IMR-90 (cell line): ENCODE measurements at regions of chr1 and their contacts with region 1.

Region 1: DNA sequence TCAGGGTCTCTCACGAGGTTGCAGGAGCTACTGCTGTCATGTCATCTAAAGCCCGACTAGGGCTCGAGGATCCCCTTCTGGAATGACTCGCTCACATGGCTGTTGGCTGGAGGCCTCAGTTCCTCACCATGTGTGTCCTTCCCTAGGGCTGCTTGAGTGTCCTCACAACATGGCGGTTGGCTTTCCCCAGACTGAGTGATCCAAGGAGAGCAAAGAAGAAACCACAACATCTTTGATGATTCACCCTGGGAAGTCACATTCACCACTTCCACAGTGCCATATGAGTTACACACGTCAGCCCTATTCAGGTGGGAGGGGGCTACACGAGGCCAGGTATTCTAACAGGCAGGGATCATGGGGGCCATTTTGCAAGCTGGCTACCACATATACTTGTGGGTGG is 64.9 kb downstream of the FHAD1 start:
- DNase-seq: peak; percentile 33
- ATAC-seq: no peak
- H3K4me3 ChIP-seq: no peak overlapping the region
- H3K27ac ChIP-seq: no peak overlapping the region
- H3K4me1 ChIP-seq: no peaks in the 10 kb centered on the region; the same call in 1 of the 2 replicates
- H3K27me3 ChIP-seq: peaks cover 11% of the 10 kb centered on the region; the same call in 1 of the 2 replicates
- CTCF ChIP-seq: no peak
- POLR2A ChIP-seq: no peak
- RAD21 ChIP-seq: no peak

Region 2: GRCh38 chr1:15089258-15089992 is 222.5 kb before region 1 on chr1:
- CTCF ChIA-PET with region 1: no interaction called
- POLR2A ChIA-PET with region 1: interaction called, 10 read pairs
- dilution Hi-C with region 1: no loop called
- in situ Hi-C with region 1: no loop called
- intact Hi-C with region 1: no loop called
- DNase-seq: no peak
- ATAC-seq: no peak
- H3K4me3 ChIP-seq: no peak overlapping the region
- H3K27ac ChIP-seq: no peak overlapping the region
- H3K4me1 ChIP-seq: peaks cover 6% of the 10 kb centered on the region; the same call in 1 of the 2 replicates
- H3K27me3 ChIP-seq: no peaks in the 10 kb centered on the region
- CTCF ChIP-seq: no peak
- POLR2A ChIP-seq: no peak
- RAD21 ChIP-seq: no peak

Region 3: DNA sequence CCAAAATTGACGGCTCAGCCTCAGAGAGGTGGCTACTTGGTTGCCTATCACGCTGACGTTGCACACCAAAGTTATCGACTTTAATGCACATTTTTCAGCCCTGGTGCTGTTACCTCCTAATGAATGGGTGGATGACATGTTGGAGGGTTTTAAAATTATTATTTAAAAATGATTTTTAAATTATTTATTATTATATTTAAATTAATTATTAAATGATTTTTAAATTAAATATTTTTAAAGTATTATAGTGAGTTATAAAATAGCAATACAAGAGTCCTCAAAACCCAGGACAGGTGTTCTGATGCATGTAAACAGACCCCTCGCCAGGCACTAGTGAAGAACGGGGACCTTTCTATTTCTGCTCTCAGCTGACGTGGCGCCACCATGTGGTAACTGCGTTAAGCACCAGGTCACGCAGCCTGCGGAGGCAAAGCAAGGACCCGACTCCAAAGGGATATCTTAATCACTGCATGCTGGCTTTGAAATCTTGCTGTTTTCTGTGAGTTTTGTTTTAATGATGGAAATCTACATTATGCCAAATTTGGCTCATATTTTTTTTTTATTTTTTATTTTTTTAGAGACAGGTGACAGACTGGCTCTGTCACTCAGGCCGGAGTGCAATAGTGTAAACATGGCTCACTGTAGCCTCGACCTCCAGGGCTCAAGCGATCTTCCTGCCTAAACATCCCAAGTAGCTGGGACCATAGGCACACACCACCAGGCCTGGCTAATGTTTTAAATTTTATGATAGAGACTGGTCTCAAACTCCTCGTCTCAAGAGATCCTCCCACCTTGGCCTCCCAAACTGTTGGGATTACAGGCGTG is 189.5 kb after region 1 on chr1:
- CTCF ChIA-PET with region 1: no interaction called
- POLR2A ChIA-PET with region 1: no interaction called
- dilution Hi-C with region 1: no loop called
- in situ Hi-C with region 1: loop called (anchors 10 kb)
- intact Hi-C with region 1: no loop called
- DNase-seq: peak; percentile 49
- ATAC-seq: peak; percentile 87
- H3K4me3 ChIP-seq: no peak overlapping the region
- H3K27ac ChIP-seq: no peak overlapping the region
- H3K4me1 ChIP-seq: no peaks in the 10 kb centered on the region
- H3K27me3 ChIP-seq: no peaks in the 10 kb centered on the region
- CTCF ChIP-seq: peak; percentile 67
- POLR2A ChIP-seq: no peak
- RAD21 ChIP-seq: peak; percentile 63